Naive thymus-derived CD4-positive, alpha-beta T cell (primary cell): ENCODE measurements at regions of chr4 and their contacts with region 1.

Region 1: DNA sequence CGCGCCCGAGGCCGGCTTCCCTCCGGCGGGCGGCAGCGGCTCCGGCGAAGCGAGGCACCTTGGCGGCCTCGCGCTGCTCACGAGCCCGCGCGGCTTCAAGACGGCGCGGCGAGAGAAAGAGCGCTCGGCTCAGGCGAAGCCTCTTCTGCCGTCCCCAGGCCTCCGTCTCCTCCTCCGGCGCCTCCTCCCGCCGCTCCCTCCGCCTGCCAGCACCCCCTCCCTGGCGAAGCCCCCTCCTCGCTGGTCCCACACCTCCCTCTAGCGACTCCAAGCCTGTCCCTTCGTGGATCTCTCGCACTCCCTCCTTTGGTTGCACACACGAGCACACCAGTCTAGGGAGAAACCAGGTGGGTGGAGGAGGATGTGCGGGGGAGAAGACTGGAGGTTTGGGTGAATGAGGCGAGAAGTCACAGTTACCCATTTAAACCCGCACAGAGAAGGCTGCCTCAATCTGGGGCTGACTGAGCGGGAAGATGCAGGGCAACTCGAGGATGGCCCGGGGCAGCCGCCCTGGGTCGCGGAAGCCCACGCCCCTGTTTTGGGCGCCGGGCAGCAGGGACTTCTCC is at the start of gene CAMK2D:
- DNase-seq: peak; percentile 66 to 91 (median 87)
- ATAC-seq: peak; percentile 71
- H3K4me3 ChIP-seq: peak within 1 kb of the TSS; percentile 97
- H3K4me3 Mint-ChIP-seq: peak within 1 kb of the TSS; percentile 92 to 100 (median 96)
- H3K27ac ChIP-seq: peak within 1 kb of the TSS; percentile 93
- H3K27ac Mint-ChIP-seq: peak within 1 kb of the TSS; percentile 96 to 100 (median 98)
- H3K4me1 ChIP-seq: peaks cover 5 to 18% of the 10 kb centered on the region in 2 donors
- H3K4me1 Mint-ChIP-seq: peaks cover 15 to 51% (median 43%) of the 10 kb centered on the region in 7 donors
- H3K27me3 ChIP-seq: no peaks in the 10 kb centered on the region
- H3K27me3 Mint-ChIP-seq: peaks cover 0 to 3% (median 0%) of the 10 kb centered on the region in 5 donors
- total RNA-seq, gene CAMK2D: 35.8 to 41.2 (median 40.0) TPM

Region 2: DNA sequence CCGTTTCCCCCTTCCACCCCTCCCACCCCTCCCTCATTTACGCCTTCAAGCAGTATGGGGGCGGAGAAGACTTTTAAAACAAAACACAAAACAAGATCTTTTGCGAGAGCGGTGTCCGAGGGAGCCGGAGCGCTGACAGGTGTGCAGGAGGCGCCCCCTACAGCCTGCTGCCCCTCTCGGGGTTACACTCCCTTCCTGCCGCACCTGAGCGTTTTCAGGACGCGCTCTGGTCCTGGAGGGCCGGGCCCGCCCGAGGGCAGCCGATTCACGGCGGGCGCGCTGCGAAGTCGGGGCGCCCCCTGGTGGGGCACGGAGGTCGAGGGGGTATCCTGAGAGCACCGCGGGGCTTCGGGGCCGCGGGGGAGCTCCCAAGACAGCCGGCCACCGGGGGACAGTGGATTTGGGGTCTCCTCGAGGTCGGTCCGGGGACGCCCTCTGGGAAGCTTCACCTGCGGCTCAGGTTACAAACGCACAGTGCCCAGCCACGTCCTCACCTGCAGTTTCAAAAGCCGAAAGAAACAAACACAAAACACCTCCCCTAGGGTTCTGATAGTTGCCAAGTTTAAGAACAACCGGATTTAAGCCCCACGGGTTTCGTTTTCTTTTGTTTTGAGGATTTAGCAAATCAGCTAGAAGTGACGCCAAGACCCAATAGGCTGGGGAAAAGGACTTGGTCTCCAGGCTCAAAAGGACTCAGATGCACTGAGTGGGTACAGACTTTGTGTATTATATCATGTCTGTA is 1237.8 kb before region 1 on chr4:
- CTCF ChIA-PET with region 1: no interaction called
- POLR2A ChIA-PET with region 1: no interaction called
- intact Hi-C with region 1: no loop called
- DNase-seq: peak; percentile 52 to 83 (median 71)
- ATAC-seq: peak; percentile 90
- H3K4me3 ChIP-seq: peak overlapping the region; percentile 69
- H3K4me3 Mint-ChIP-seq: peak overlapping the region; percentile 82 to 96 (median 90)
- H3K27ac ChIP-seq: no peak overlapping the region
- H3K27ac Mint-ChIP-seq: peak overlapping the region in 2 of 9 donors; percentile 11 to 62
- H3K4me1 ChIP-seq: peaks cover 7 to 22% of the 10 kb centered on the region in 2 donors
- H3K4me1 Mint-ChIP-seq: peaks cover 15 to 44% (median 33%) of the 10 kb centered on the region in 7 donors
- H3K27me3 ChIP-seq: peaks cover 16 to 40% of the 10 kb centered on the region in 2 donors
- H3K27me3 Mint-ChIP-seq: peaks cover 52 to 84% (median 63%) of the 10 kb centered on the region in 5 donors

Region 3: DNA sequence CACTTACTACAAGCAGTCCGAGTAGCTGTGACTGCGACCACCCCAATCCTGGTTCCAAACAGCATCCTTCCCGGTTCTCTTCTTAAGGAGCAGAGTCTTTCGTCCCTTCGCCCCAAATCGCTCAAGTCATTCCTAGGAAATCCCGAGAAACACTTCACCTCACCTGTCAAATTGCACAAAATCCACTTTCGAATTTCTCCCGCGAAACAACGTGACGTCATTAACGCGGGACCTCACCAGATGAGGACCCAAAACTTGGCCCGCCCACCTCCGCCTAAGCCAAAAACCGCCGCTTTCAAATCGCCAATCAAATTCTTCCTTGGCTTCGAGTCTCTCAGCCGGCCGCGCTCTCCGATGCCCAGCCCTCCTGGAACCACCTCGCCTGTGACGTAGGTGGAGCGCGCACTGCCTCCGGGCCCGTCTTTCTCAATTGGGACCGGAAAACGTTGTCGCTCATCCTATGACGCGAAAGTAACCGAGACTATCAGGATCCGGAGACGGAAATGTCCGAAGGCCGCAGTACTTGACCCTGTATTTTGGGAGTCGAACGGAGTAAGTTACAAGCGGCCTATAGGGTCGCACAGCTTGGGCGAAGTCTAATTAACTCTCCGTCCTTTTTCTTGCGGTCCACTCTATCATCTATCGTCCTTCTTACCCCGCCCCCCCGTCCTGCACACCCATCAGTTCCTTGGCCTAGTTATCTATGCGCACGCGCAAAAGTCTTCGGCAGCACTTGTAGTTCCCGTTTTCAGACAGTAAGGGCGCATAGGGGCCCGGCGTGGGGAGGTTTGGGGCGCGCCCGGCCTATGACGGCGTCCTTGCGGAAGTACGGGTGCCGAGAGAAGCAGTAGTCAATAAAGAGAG is 1124.8 kb before region 1 on chr4 and contains the starts of genes LARP7 and ZGRF1:
- CTCF ChIA-PET with region 1: no interaction called
- POLR2A ChIA-PET with region 1: no interaction called
- intact Hi-C with region 1: loop called (anchors 1 kb)
- DNase-seq: peak; percentile 91 to 99 (median 99)
- ATAC-seq: peak; percentile 91
- H3K4me3 ChIP-seq: peak within 1 kb of the TSS; percentile 98
- H3K4me3 Mint-ChIP-seq: peak within 1 kb of the TSS in 2 of 10 donors; percentile 26 to 46
- H3K27ac ChIP-seq: peak within 1 kb of the TSS; percentile 88
- H3K27ac Mint-ChIP-seq: peak within 1 kb of the TSS in 1 of 9 donors; percentile 66
- H3K4me1 ChIP-seq: peaks cover 9 to 17% of the 10 kb centered on the region in 2 donors
- H3K4me1 Mint-ChIP-seq: peaks cover 19 to 29% (median 21%) of the 10 kb centered on the region in 7 donors
- H3K27me3 ChIP-seq: no peaks in the 10 kb centered on the region
- H3K27me3 Mint-ChIP-seq: no peaks in the 10 kb centered on the region
- total RNA-seq, gene LARP7: 28.6 to 48.2 (median 47.7) TPM
- total RNA-seq, gene ZGRF1: 8.1 to 29.8 (median 10.5) TPM

Region 4: GRCh38 chr4:113547487-113548042 is 214.1 kb before region 1 on chr4:
- CTCF ChIA-PET with region 1: interaction called, 7 read pairs
- POLR2A ChIA-PET with region 1: interaction called, 8 read pairs
- intact Hi-C with region 1: loop called (anchors 1 kb)
- DNase-seq: peak; percentile 59 to 89 (median 85)
- ATAC-seq: peak; percentile 100
- H3K4me3 ChIP-seq: no peak overlapping the region
- H3K4me3 Mint-ChIP-seq: peak overlapping the region in 1 of 10 donors; percentile 39
- H3K27ac ChIP-seq: peak overlapping the region; percentile 37
- H3K27ac Mint-ChIP-seq: peak overlapping the region; percentile 18 to 85 (median 73)
- H3K4me1 ChIP-seq: peaks cover 4 to 8% of the 10 kb centered on the region in 2 donors
- H3K4me1 Mint-ChIP-seq: peaks cover 4 to 22% (median 15%) of the 10 kb centered on the region in 7 donors
- H3K27me3 ChIP-seq: no peaks in the 10 kb centered on the region
- H3K27me3 Mint-ChIP-seq: no peaks in the 10 kb centered on the region

Region 5: DNA sequence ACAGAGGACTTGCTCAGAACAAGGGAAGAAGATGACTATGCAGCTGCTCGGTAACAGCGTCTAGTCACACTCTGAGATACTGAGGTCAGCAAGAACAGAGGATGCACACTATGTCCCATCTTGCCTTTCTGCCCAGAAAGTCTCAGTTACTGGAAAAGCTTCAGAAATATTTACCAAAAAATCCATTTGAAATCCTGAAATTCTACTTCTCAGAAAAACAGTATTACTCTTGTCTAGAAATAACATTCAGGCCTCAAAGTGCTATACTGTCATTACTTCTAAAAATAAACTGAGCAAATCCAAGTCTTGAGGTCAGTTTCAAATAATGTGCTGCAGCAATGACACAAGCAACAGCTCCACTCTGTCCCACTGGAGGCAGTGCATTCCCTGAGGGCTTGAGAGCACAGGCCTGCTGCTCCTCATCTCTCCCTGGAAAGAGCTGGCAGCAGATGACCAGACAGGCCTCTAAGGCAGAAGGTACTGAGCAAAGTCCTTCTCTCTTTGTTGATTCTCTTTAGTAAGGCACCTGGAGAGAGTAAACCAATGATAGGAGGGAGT is 77.1 kb before region 1 on chr4:
- CTCF ChIA-PET with region 1: no interaction called
- POLR2A ChIA-PET with region 1: interaction called, 7 read pairs
- intact Hi-C with region 1: loop called (anchors 1 kb)
- DNase-seq: peak in 1 of 9 donors; percentile 28
- ATAC-seq: no peak
- H3K4me3 ChIP-seq: no peak overlapping the region
- H3K4me3 Mint-ChIP-seq: peak overlapping the region in 7 of 10 donors; percentile 3 to 83 (median 73)
- H3K27ac ChIP-seq: peak overlapping the region; percentile 50
- H3K27ac Mint-ChIP-seq: peak overlapping the region; percentile 81 to 93 (median 90)
- H3K4me1 ChIP-seq: peaks cover 27 to 30% of the 10 kb centered on the region in 2 donors
- H3K4me1 Mint-ChIP-seq: peaks cover 20 to 66% (median 62%) of the 10 kb centered on the region in 7 donors
- H3K27me3 ChIP-seq: no peaks in the 10 kb centered on the region
- H3K27me3 Mint-ChIP-seq: no peaks in the 10 kb centered on the region

Region 6: DNA sequence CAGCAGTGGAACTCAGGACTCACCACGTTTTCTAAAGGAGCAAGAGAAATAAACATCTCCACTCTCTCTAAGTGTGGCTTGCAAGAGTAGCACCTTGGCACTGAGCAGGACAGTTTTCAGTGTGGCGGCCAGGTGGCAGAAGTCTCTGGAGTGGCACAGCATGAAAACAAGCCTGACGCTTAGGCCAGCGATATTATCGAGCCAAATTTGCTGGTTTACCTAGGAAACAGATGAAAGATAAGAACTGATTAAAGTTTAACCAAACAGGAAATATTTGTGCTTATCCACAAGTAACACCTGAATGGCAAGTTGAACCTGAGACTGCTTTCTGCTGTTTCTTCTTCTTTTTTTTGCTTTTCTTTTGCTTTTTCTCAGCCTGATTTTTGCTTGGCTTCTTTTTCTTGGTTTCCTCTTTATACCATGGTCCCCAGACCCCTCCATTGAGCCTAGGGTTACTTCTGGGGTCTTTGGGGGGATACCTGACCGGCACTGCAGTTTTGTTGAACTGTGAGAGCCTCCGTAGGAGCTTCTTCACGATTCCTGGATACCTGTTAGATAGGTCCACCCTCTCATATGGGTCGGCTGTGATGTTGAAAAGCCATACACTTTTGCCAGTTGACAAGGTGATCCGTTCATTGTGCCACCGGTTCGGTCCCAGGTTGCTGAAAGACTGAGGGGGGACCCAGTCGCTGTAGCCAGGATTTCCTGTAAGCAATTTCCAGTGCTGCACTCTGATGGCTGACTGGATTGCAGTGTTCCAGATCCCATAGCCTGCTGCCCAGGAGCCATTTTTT is 140.5 kb after region 1 on chr4:
- CTCF ChIA-PET with region 1: no interaction called
- POLR2A ChIA-PET with region 1: interaction called, 15 read pairs
- intact Hi-C with region 1: loop called (anchors 1 kb)
- DNase-seq: peak; percentile 27 to 86 (median 72)
- ATAC-seq: peak; percentile 88
- H3K4me3 ChIP-seq: peak overlapping the region; percentile 7
- H3K4me3 Mint-ChIP-seq: peak overlapping the region; percentile 32 to 78 (median 70)
- H3K27ac ChIP-seq: peak overlapping the region; percentile 65
- H3K27ac Mint-ChIP-seq: peak overlapping the region; percentile 74 to 99 (median 96)
- H3K4me1 ChIP-seq: peaks cover 65 to 72% of the 10 kb centered on the region in 2 donors
- H3K4me1 Mint-ChIP-seq: peaks cover 23 to 87% (median 82%) of the 10 kb centered on the region in 7 donors
- H3K27me3 ChIP-seq: no peaks in the 10 kb centered on the region
- H3K27me3 Mint-ChIP-seq: no peaks in the 10 kb centered on the region

Region 7: DNA sequence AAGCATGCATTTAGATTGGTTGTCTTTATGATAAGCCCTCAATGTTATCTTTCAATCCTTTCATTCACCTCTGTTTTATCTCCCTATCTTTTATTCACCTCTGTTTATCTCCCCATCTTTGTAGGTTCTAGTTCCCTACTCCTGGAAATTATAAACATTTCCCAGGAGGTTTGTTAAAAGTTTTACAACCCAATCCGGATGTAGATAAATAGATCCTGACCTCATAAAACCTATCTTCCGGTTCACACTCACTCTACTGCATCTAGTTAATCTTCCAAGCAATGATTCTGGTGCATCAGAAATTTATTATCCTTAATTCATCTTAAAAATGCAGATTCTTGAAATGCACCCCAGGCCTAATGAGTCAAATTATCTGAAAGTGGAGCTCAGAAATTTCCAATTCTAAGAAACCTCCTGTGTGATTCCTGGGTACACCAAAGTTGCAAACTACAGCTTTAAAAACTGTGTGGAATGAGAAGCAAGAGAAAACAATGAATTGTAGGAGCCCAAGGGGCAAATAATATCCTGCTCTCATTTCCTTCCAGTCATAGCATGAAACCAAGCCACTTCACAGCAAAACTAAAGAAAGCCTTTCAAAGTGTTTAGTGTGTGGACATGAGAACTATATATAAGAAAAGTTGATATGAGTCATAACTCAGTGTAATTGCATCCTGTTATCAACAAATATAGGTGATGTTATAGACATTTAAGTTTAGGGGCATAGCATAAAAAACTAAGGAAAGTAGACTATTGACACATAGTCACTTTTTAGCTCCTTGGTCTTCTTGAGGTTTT is 785.8 kb after region 1 on chr4:
- CTCF ChIA-PET with region 1: no interaction called
- POLR2A ChIA-PET with region 1: no interaction called
- intact Hi-C with region 1: no loop called
- DNase-seq: no peak
- ATAC-seq: no peak
- H3K4me3 ChIP-seq: no peak overlapping the region
- H3K4me3 Mint-ChIP-seq: no peak overlapping the region
- H3K27ac ChIP-seq: no peak overlapping the region
- H3K27ac Mint-ChIP-seq: no peak overlapping the region
- H3K4me1 ChIP-seq: no peaks in the 10 kb centered on the region
- H3K4me1 Mint-ChIP-seq: no peaks in the 10 kb centered on the region
- H3K27me3 ChIP-seq: peaks cover 0 to 1% of the 10 kb centered on the region in 2 donors
- H3K27me3 Mint-ChIP-seq: peaks cover 0 to 7% (median 0%) of the 10 kb centered on the region in 5 donors